Activated naive CD4-positive, alpha-beta T cell treated with anti-CD3 and anti-CD28 coated beads for 36 hours (primary cell): ENCODE measurements at regions of chr10 and their contacts with region 1.

Region 1: DNA sequence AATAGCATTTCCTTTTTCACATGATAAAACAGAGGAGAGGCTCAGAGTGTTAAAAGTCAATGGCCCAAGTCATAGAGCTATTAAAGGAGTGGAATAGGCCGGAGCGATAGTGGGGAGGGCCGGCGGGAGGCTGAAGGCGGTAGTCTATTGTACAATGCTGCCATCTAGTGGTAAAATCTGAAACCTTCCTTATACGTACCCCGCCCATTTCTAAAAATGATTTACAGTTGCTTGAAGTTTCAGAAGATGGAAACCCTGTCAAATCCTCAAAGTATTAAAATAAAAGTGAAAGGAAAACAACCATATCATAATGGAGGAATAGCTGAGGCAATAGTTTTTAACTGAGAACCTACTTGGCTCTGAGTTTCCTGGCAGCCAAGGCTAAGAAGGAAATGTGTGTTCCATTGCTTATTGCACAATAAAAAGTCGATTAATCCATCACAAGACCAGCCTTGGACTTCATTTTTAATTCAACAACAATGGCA is 209.1 kb downstream of the CCSER2 start:
- DNase-seq: peak; percentile 45
- H3K4me3 Mint-ChIP-seq: no peak overlapping the region
- H3K27ac Mint-ChIP-seq: no peak overlapping the region
- H3K4me1 Mint-ChIP-seq: peaks cover 27% of the 10 kb centered on the region
- H3K27me3 Mint-ChIP-seq: peaks cover 16% of the 10 kb centered on the region

Region 2: GRCh38 chr10:84256510-84257342 is 280.8 kb before region 1 on chr10:
- CTCF ChIA-PET with region 1: interaction called, 261 read pairs
- intact Hi-C with region 1: no loop called
- DNase-seq: peak; percentile 73
- H3K4me3 Mint-ChIP-seq: no peak overlapping the region
- H3K27ac Mint-ChIP-seq: no peak overlapping the region
- H3K4me1 Mint-ChIP-seq: peaks cover 7% of the 10 kb centered on the region
- H3K27me3 Mint-ChIP-seq: peaks cover 19% of the 10 kb centered on the region

Region 3: DNA sequence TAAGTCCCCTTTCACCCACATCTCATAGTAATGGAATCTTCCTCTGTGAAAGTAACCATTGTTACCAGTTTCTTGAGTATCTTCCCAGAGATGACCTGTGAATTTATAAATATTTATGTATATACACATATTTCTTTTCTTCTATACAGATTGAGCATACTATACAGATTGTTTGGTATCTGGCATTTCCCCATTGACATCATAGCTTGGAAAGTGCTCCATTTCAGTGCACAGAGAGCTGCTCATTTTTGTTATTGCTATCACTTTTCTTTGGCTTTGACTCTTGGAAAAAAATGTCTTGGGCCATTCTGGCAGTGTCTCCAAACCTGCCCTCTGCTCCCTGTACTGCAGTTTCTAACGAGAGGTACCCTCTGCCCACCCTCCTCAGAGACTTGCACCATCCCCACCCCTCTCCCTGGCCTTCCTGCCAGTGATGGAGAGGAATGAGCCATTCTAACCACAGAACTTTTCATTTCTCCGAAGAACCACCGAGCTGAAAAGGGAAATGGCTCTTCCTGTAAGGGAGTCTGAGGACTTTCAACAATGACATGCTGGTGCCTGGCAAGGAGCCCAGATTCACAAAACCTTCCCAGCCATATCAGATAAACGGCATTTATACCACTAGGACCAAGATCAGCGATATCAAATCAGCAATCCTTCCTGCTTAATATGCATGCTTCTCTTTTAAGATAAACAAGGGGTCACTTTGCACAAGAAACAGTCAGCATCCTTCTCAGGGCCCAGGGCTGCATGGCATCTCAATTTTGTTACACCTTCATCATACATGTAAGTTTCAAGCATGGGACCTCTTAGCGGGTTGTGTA is 228.8 kb before region 1 on chr10:
- CTCF ChIA-PET with region 1: interaction called, 3 read pairs
- intact Hi-C with region 1: loop called (anchors 1 kb)
- DNase-seq: peak; percentile 85
- H3K4me3 Mint-ChIP-seq: peak overlapping the region; percentile 42
- H3K27ac Mint-ChIP-seq: peak overlapping the region; percentile 93
- H3K4me1 Mint-ChIP-seq: peaks cover 45% of the 10 kb centered on the region
- H3K27me3 Mint-ChIP-seq: peaks cover 1% of the 10 kb centered on the region

Region 4: GRCh38 chr10:84352251-84352842 is 185.1 kb before region 1 on chr10:
- CTCF ChIA-PET with region 1: interaction called, 89 read pairs
- intact Hi-C with region 1: loop called (anchors 1 kb)
- DNase-seq: peak; percentile 85
- H3K4me3 Mint-ChIP-seq: no peak overlapping the region
- H3K27ac Mint-ChIP-seq: no peak overlapping the region
- H3K4me1 Mint-ChIP-seq: peaks cover 74% of the 10 kb centered on the region
- H3K27me3 Mint-ChIP-seq: no peaks in the 10 kb centered on the region

Region 5: DNA sequence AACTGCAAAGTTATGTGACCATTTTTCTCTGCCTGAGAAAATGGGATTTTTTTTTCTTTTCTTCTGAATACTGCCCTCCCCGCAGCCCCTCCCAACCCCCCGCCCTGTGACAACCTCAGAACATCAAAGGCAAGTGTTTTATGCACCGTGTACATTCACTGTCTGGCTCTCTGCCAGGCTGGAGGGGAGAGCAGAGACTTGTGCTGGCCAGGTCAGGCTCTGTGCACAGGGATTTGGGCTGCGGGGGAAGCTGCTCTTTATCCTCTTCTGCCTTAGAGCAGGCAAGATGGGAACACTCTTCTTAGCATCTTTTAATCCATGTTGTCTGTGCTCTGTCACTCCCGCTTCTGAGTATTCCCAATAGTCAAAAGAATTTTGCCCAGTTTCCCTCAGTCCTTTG is 14.0 kb before region 1 on chr10:
- CTCF ChIA-PET with region 1: interaction called, 13 read pairs
- intact Hi-C with region 1: no loop called
- DNase-seq: peak; percentile 26
- H3K4me3 Mint-ChIP-seq: no peak overlapping the region
- H3K27ac Mint-ChIP-seq: no peak overlapping the region
- H3K4me1 Mint-ChIP-seq: peaks cover 5% of the 10 kb centered on the region
- H3K27me3 Mint-ChIP-seq: no peaks in the 10 kb centered on the region

Region 6: DNA sequence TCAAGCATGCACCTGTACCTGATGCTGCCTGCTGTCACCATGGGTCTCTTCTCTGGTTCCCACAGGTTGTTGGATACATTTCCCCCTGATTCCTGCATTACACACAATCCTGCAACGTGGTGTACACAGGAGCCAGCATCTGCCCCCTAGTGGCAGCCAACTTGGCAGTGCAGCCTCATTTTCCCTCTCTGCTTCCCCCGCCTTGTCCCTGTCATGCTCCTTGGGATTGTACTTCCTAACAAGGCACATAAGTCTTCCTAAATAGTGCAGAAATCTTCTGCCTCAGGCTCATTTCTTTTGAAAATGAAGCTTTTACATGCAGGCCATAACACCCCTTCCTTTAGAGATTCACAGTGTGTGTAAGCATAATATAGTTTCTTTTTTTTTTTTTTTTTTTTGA is 178.4 kb after region 1 on chr10:
- CTCF ChIA-PET with region 1: interaction called, 4 read pairs
- intact Hi-C with region 1: loop called (anchors 1 kb)
- DNase-seq: peak; percentile 18
- H3K4me3 Mint-ChIP-seq: no peak overlapping the region
- H3K27ac Mint-ChIP-seq: no peak overlapping the region
- H3K4me1 Mint-ChIP-seq: no peaks in the 10 kb centered on the region
- H3K27me3 Mint-ChIP-seq: peaks cover 5% of the 10 kb centered on the region

Region 7: DNA sequence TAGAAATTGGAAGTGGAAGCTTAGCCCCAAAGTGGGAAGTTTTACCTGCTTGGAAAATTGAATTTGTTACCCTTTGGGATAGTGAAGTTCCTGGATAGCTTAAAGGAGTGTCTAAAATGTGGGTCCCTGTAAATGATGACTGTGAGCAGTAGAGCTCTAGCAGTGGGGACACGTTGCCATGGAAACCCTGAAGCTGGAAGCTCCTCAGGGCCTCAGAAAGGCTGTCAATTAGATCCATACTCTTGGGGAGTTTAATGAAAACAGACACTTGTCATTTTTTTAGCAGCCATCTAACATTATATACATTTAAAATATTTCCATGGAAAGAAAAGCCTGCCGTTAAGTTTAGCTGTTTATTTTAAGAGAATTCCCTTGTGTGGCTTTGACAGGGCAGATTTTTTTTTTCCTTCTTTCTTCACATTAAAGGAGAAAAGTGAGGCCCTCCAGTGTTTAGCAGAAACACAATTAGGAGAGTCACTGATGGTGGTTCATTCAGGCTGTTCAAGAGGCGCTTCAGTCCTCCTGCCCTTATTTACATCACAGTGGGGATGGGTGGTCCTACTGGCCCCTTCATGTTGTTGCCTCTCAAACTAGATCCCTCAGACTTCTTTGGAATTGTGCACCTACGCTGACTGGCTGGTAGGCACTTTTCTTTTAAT is 309.3 kb after region 1 on chr10:
- CTCF ChIA-PET with region 1: no interaction called
- intact Hi-C with region 1: no loop called
- DNase-seq: no peak
- H3K4me3 Mint-ChIP-seq: no peak overlapping the region
- H3K27ac Mint-ChIP-seq: no peak overlapping the region
- H3K4me1 Mint-ChIP-seq: no peaks in the 10 kb centered on the region
- H3K27me3 Mint-ChIP-seq: no peaks in the 10 kb centered on the region

Region 8: DNA sequence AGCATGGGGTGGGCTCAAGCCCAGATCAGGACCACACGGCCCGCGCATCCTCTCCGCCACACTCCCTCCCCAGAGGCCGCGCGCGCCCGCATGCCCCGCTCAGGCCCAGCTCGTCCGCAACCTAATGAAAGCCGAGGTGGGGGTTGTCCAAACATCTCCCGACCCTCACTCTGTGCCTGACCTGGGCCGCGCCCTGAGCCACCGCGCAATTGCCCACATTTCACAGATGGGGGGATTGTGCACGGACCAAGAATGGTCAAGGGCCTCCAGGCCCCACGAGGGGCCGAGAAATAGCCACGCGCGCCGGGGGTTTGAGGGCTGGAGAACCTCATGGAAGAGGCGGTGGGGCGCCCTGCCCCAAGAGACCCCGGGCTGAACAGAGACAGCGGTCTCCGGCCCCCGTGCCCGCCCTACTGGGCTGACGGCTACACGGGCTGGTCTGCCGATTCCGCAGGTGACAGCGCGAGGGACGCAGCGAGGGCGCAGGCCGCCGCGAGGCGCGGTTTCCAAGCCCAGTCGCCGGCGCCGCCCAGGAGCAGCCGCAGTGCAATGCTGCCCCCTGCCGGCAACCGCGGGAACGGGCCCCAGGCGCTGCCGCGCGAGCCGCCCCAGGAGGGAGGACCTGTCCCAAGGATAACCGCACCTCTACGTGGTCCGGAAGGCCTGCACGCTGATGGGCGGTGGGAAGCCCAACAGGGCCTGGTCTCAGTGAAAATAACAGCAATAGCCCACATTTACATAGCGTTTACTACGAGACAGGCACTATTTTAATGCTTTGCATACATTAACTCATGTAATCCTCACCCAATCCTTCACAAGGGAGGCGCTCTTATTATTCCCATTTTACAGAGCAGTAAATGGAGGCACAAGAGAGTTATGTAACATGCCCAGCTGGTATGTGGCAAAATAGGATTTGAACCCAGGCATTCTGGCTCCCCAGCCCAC is 1839.6 kb after region 1 on chr10:
- CTCF ChIA-PET with region 1: no interaction called
- intact Hi-C with region 1: loop called (anchors 1 kb)
- DNase-seq: peak; percentile 81
- H3K4me3 Mint-ChIP-seq: no peak overlapping the region
- H3K27ac Mint-ChIP-seq: no peak overlapping the region
- H3K4me1 Mint-ChIP-seq: peaks cover 2% of the 10 kb centered on the region
- H3K27me3 Mint-ChIP-seq: peaks cover 23% of the 10 kb centered on the region